H1 (cell line): ENCODE measurements at regions of chr4 and their contacts with region 1.

Region 1: DNA sequence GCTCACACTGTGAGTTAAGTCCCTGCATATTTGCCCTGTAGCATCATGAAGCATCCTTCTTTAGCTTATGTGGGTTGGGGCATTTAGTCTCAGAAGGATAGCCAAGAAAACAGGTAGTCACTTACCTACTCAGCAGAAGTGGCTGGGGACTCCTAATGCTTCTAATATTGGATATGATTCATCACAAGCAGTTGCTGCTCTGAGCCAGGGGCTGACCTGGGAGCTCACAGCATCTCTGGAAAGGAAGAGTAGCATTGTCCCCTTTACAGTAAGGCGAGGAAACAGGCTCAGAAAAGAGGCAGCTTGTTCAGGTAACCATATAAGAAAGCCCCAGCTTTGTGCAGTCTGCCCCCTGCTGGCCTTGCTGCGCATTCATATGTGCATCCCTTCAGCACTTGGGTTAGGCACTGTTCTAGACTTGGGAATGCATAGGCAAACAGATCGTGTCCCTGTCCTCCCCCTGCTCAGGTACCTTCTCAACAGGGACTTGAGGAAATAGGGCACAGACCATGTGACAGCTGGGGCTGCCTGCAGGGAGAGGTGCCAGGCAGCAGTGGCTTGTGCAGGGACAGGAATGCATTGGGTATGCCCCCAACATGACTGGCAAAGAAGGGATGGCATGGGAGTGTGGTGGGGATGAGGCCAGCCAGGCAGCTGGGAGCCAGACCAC is 35.7 kb upstream of the TBC1D14 start:
- DNase-seq: peak in 1 of 2 experiments; percentile 82
- H3K4me3 ChIP-seq: no peak overlapping the region
- H3K27ac ChIP-seq: no peak overlapping the region
- H3K4me1 ChIP-seq: no peaks in the 10 kb centered on the region
- H3K27me3 ChIP-seq: no peaks in the 10 kb centered on the region
- CTCF ChIP-seq: peak; percentile 76 to 93 (median 76)
- EP300 ChIP-seq: no peak
- POLR2A ChIP-seq: no peak
- RAD21 ChIP-seq: peak; percentile 81 to 86

Region 2: DNA sequence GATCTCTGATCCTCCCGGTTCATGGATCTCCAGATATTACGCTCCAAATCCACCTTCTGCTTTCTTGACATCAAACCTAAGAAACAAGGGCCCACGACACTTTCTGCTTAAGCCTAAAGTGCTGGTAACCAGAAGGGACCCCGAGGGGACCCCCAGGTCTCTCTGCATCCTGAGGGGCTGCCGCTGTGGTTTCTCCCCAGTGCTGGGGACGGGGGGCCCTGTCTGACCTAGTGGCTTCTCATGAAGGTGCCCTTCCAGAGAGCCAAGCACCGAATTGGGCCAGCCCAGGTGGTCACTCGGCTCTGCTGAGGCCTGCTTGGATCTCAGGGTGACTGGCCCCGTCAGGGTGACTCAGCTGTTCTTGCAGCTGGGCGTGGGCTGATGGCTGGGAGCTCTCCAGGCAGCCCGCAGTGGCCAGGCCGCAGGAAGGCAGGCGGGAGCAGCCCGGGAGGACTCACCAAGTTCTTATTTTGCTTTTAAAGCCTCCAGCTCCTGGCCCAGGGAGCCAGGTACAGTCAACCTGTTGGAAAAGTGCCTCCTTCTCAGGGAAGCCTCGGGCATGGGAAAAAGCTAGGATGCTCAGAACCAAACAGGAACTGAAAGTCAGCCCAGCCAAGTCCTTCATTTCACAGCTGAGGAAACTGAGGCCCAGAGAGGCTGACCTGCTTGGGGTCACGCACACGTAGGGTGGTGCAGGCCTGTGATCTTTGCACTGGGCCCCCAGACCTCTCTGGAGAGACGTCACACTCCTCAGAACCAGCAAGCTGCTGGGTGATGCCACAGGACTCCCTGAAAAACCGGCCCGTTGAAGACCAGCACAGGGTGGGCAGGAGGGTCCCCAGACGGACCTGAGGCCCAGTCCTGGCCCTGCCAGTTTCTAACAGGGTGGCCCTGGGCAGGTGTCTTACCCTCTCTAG is 141.2 kb before region 1 on chr4:
- CTCF ChIA-PET with region 1: interaction called, 12 read pairs
- POLR2A ChIA-PET with region 1: no interaction called
- DNase-seq: no peak
- H3K4me3 ChIP-seq: no peak overlapping the region
- H3K27ac ChIP-seq: no peak overlapping the region
- H3K4me1 ChIP-seq: peaks cover 0 to 9% (median 3%) of the 10 kb centered on the region in 4 experiments; a peak in 4 of 7 replicates
- H3K27me3 ChIP-seq: no peaks in the 10 kb centered on the region
- CTCF ChIP-seq: no peak
- EP300 ChIP-seq: no peak
- POLR2A ChIP-seq: no peak
- RAD21 ChIP-seq: no peak

Region 3: GRCh38 chr4:6776930-6777635 is 96.8 kb before region 1 on chr4:
- CTCF ChIA-PET with region 1: interaction called, 38 read pairs
- POLR2A ChIA-PET with region 1: no interaction called
- DNase-seq: no peak
- H3K4me3 ChIP-seq: no peak overlapping the region
- H3K27ac ChIP-seq: no peak overlapping the region
- H3K4me1 ChIP-seq: peaks cover 2 to 18% (median 7%) of the 10 kb centered on the region in 4 experiments; a peak in 6 of 7 replicates
- H3K27me3 ChIP-seq: peaks cover 0 to 9% (median 0%) of the 10 kb centered on the region in 4 experiments; a peak in 2 of 7 replicates
- CTCF ChIP-seq: no peak
- EP300 ChIP-seq: no peak
- POLR2A ChIP-seq: no peak
- RAD21 ChIP-seq: no peak

Region 4: DNA sequence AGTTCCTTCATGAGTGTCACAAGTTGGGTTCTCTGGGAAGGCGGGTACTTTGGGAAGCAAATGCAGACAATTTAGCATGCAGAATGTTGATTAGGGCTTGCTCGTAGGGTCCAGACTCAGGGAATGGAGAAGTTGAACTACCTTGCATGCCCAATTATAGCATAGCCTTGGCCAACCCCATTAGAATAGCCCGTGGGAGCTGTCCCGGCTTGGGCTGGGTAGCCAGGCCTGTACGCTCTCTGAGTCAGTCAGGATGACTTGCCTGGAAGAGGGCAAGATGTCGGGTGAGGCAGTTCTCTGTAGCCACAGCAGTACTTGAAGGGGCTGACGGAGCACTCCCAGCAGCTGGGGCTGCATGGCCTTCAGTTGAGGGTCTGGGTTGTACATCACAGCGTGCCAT is 71.9 kb before region 1 on chr4:
- CTCF ChIA-PET with region 1: interaction called, 13 read pairs
- POLR2A ChIA-PET with region 1: no interaction called
- DNase-seq: no peak
- H3K4me3 ChIP-seq: no peak overlapping the region
- H3K27ac ChIP-seq: no peak overlapping the region
- H3K4me1 ChIP-seq: peaks cover 0 to 4% (median 1%) of the 10 kb centered on the region in 4 experiments; a peak in 2 of 7 replicates
- H3K27me3 ChIP-seq: no peaks in the 10 kb centered on the region
- CTCF ChIP-seq: no peak
- EP300 ChIP-seq: no peak
- POLR2A ChIP-seq: no peak
- RAD21 ChIP-seq: no peak

Region 5: GRCh38 chr4:6885951-6886557 is 12.1 kb after region 1 on chr4:
- CTCF ChIA-PET with region 1: interaction called, 67 read pairs
- POLR2A ChIA-PET with region 1: no interaction called
- DNase-seq: no peak
- H3K4me3 ChIP-seq: no peak overlapping the region
- H3K27ac ChIP-seq: no peak overlapping the region
- H3K4me1 ChIP-seq: no peaks in the 10 kb centered on the region
- H3K27me3 ChIP-seq: no peaks in the 10 kb centered on the region
- CTCF ChIP-seq: peak in 2 of 3 experiments; percentile 2 to 33; a peak in 2 of 4 replicates
- EP300 ChIP-seq: no peak
- POLR2A ChIP-seq: no peak
- RAD21 ChIP-seq: peak in 1 of 2 experiments; percentile 24; a peak in 1 of 4 replicates